ENCODE measurements at regions of chrX and their contacts with region 1.

Region 1: GRCh38 chrX:136028251-136028984 is 43.2 kb downstream of the SLC9A6 start:
- DNase-seq: peak in 7 of 9 donors; percentile 26 to 53 (median 41)
- ATAC-seq: peak; percentile 76
- H3K4me3 ChIP-seq: no peak overlapping the region
- H3K4me3 Mint-ChIP-seq: no peak overlapping the region
- H3K27ac ChIP-seq: no peak overlapping the region
- H3K27ac Mint-ChIP-seq: no peak overlapping the region
- H3K4me1 ChIP-seq: no peaks in the 10 kb centered on the region
- H3K4me1 Mint-ChIP-seq: peaks cover 0 to under 1% (median 0%) of the 10 kb centered on the region in 7 donors
- H3K27me3 ChIP-seq: no peaks in the 10 kb centered on the region
- H3K27me3 Mint-ChIP-seq: no peaks in the 10 kb centered on the region

Region 2: GRCh38 chrX:136065044-136065671 is 36.7 kb after region 1 on chrX:
- CTCF ChIA-PET with region 1: interaction called, 11 read pairs
- POLR2A ChIA-PET with region 1: no interaction called
- intact Hi-C with region 1: no loop called
- DNase-seq: peak in 7 of 9 donors; percentile 52 to 83 (median 76)
- ATAC-seq: peak; percentile 85
- H3K4me3 ChIP-seq: no peak overlapping the region
- H3K4me3 Mint-ChIP-seq: peak overlapping the region; percentile 48 to 80 (median 63)
- H3K27ac ChIP-seq: peak overlapping the region; percentile 61
- H3K27ac Mint-ChIP-seq: peak overlapping the region; percentile 70 to 98 (median 96)
- H3K4me1 ChIP-seq: peaks cover 0 to 26% of the 10 kb centered on the region in 2 donors
- H3K4me1 Mint-ChIP-seq: peaks cover 9 to 42% (median 31%) of the 10 kb centered on the region in 7 donors
- H3K27me3 ChIP-seq: no peaks in the 10 kb centered on the region
- H3K27me3 Mint-ChIP-seq: no peaks in the 10 kb centered on the region

Region 3: GRCh38 chrX:136130931-136131833 is 102.8 kb after region 1 on chrX:
- CTCF ChIA-PET with region 1: no interaction called
- POLR2A ChIA-PET with region 1: no interaction called
- intact Hi-C with region 1: no loop called
- DNase-seq: no peak
- ATAC-seq: no peak
- H3K4me3 ChIP-seq: no peak overlapping the region
- H3K4me3 Mint-ChIP-seq: no peak overlapping the region
- H3K27ac ChIP-seq: no peak overlapping the region
- H3K27ac Mint-ChIP-seq: peak overlapping the region in 1 of 9 donors; percentile 53
- H3K4me1 ChIP-seq: no peaks in the 10 kb centered on the region
- H3K4me1 Mint-ChIP-seq: peaks cover 0 to 11% (median 0%) of the 10 kb centered on the region in 7 donors
- H3K27me3 ChIP-seq: no peaks in the 10 kb centered on the region
- H3K27me3 Mint-ChIP-seq: no peaks in the 10 kb centered on the region

Region 4: DNA sequence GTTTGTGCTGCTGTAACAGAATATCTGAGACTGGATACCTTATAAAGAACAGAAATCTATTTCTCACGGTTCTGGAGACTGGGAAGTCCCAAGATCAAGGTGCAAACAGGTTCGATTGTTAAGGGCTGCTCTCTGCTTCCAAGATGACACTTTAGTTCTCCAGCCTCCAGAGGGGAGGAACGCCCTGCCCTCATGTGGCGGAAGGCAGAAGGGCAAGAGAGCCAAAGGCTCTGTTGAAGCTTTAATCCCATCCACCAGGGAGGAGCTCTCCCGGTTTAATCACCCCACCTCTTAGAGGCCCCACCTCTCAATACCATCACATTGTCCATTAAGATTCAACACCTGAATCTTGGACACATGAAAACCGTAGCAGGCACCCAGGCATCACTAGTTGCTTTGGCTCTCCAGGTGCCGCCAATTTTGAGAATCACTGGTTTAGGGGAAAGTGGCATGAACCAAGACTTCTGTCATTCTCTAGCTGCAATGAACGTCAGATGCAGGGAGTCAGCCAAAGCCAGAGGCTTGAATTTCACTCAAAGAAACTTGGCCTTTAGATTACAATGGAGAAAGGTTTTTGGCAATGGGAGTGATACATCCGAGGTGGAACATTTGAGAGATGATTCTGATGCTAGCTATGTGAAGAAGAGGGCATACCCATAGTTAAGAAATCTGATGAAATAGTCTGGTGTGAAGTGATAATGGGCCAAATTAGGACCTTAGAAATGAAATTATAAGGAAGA is 134.6 kb after region 1 on chrX:
- CTCF ChIA-PET with region 1: interaction called, 60 read pairs
- POLR2A ChIA-PET with region 1: interaction called, 4 read pairs
- intact Hi-C with region 1: loop called (anchors 1 kb)
- DNase-seq: peak in 8 of 9 donors; percentile 10 to 50 (median 36)
- ATAC-seq: peak; percentile 75
- H3K4me3 ChIP-seq: no peak overlapping the region
- H3K4me3 Mint-ChIP-seq: no peak overlapping the region
- H3K27ac ChIP-seq: no peak overlapping the region
- H3K27ac Mint-ChIP-seq: no peak overlapping the region
- H3K4me1 ChIP-seq: no peaks in the 10 kb centered on the region
- H3K4me1 Mint-ChIP-seq: peaks cover 0 to 18% (median 4%) of the 10 kb centered on the region in 7 donors
- H3K27me3 ChIP-seq: no peaks in the 10 kb centered on the region
- H3K27me3 Mint-ChIP-seq: no peaks in the 10 kb centered on the region

Region 5: GRCh38 chrX:136200466-136200865 is 172.0 kb after region 1 on chrX:
- CTCF ChIA-PET with region 1: interaction called, 5 read pairs
- POLR2A ChIA-PET with region 1: interaction called, 3 read pairs
- intact Hi-C with region 1: loop called (anchors 1 to 2 kb)
- DNase-seq: peak in 1 of 9 donors; percentile 10
- ATAC-seq: peak; percentile 42
- H3K4me3 ChIP-seq: no peak overlapping the region
- H3K4me3 Mint-ChIP-seq: no peak overlapping the region
- H3K27ac ChIP-seq: no peak overlapping the region
- H3K27ac Mint-ChIP-seq: no peak overlapping the region
- H3K4me1 ChIP-seq: peaks cover 22 to 26% of the 10 kb centered on the region in 2 donors
- H3K4me1 Mint-ChIP-seq: peaks cover 4 to 47% (median 30%) of the 10 kb centered on the region in 7 donors
- H3K27me3 ChIP-seq: no peaks in the 10 kb centered on the region
- H3K27me3 Mint-ChIP-seq: no peaks in the 10 kb centered on the region

Region 6: DNA sequence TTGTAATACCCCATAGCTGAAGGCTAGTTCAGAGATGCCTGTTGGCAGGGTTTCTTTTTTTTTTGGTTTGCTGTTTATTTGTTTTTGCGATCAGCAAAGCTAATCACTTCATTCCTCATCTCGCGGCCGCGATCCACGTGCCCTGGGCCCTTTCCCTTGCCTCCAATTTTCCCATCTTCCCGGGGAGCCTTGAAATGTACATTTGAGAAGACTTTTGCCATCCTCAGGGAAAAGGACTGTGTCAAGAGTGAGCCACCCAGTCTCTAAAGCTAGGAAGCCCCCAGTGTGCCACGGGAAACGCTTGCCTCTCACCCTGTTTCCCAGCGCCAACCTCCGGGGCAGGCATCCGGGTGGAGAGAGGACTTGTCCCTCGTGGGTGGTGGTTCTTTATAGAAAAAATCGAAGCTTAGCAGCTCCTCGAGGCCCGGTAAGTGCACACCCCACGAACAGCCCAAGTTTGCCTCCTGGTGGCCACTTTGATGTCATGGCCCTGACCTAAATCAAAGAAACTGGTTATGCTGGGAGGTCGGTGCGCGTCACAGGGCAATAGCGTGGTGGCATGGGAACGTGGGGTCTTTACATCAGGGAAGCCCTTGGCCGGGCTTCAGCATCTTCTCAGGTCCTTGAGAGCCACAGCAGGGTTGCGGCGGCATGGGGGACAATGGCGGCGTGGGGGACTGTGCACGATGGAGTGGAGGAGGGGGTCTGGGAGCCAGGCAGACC is 180.8 kb after region 1 on chrX:
- CTCF ChIA-PET with region 1: interaction called, 15 read pairs
- POLR2A ChIA-PET with region 1: interaction called, 3 read pairs
- intact Hi-C with region 1: loop called (anchors 1 kb)
- DNase-seq: peak in 7 of 9 donors; percentile 18 to 45 (median 33)
- ATAC-seq: peak; percentile 70
- H3K4me3 ChIP-seq: no peak overlapping the region
- H3K4me3 Mint-ChIP-seq: no peak overlapping the region
- H3K27ac ChIP-seq: no peak overlapping the region
- H3K27ac Mint-ChIP-seq: peak overlapping the region in 2 of 9 donors; percentile 70
- H3K4me1 ChIP-seq: peaks cover 11 to 15% of the 10 kb centered on the region in 2 donors
- H3K4me1 Mint-ChIP-seq: peaks cover 6 to 16% (median 10%) of the 10 kb centered on the region in 7 donors
- H3K27me3 ChIP-seq: no peaks in the 10 kb centered on the region
- H3K27me3 Mint-ChIP-seq: no peaks in the 10 kb centered on the region

Region 7: DNA sequence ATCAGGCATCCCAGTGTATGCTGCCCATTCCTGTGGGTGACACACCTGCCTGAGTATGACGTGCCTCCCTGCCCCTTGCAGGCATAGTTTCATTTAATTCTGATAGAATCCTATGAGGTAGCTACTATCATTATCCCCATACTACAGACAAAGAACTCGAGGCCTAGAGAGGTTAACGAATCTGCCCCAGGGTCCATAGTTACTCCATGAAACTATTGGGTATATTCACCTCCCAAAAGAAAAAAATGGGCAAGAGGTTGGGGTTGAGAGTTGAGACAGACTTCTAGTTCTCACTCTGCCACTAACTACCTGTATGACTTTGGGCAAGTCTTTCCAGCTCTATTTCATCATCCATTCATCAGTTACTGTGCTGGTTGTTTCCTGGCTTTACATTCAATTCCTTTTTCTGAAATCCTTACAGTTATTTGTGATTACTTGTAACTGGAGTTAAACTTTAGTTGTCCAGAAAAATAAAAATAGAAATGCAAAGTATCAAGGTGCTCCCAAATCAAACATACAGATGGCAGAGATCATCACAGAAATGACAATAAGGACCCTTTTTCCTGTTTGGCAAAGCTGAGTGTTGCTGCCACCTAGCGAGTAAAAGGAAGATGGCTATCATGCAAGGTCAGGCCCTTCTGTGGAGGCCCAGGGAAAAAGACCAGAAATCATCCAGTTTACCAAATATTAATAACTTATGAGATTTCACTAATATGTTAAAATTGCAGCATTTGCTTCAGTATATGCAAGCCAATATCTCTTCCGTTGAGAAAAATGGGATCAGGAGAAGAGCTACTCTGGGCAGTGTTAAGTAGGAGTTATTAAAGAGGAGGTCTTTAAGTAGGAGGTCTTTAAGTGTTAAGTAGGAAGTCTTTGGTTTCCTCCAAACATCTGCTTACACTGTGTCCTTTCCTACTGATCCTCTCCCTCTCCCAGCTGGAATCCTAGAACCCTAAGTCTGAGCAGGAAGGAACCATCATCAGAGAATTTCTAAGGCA is 239.9 kb after region 1 on chrX:
- CTCF ChIA-PET with region 1: interaction called, 16 read pairs
- POLR2A ChIA-PET with region 1: no interaction called
- intact Hi-C with region 1: loop called (anchors 1 kb)
- DNase-seq: peak in 7 of 9 donors; percentile 12 to 52 (median 43)
- ATAC-seq: peak; percentile 54
- H3K4me3 ChIP-seq: no peak overlapping the region
- H3K4me3 Mint-ChIP-seq: no peak overlapping the region
- H3K27ac ChIP-seq: no peak overlapping the region
- H3K27ac Mint-ChIP-seq: no peak overlapping the region
- H3K4me1 ChIP-seq: no peaks in the 10 kb centered on the region
- H3K4me1 Mint-ChIP-seq: peaks cover 0 to 11% (median 0%) of the 10 kb centered on the region in 7 donors
- H3K27me3 ChIP-seq: no peaks in the 10 kb centered on the region
- H3K27me3 Mint-ChIP-seq: no peaks in the 10 kb centered on the region

Region 8: DNA sequence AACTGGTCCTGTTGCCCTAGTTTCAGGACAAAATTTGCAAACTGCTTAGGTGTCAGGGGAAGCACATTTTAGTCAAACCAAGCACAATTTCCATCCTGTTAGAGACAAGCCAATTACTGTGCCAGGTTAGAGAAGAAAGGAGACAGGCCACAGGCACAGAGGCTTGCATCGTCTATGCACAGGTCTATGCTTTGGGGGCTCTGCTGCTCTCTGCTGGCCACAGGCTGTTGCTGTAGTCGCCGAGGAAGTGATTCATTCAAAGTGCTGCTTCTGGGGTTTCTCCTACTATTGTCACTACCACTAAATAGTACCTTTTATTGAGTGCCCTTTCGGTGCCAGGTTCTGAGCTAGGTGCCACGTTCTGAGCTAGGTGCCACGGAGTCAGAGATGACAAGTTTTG is 549.1 kb after region 1 on chrX:
- CTCF ChIA-PET with region 1: interaction called, 3 read pairs
- POLR2A ChIA-PET with region 1: no interaction called
- intact Hi-C with region 1: loop called in 1 of 2 experiments (anchors 1 kb)
- DNase-seq: peak; percentile 30 to 74 (median 62)
- ATAC-seq: peak; percentile 99
- H3K4me3 ChIP-seq: no peak overlapping the region
- H3K4me3 Mint-ChIP-seq: peak overlapping the region in 2 of 10 donors; percentile 20 to 63
- H3K27ac ChIP-seq: no peak overlapping the region
- H3K27ac Mint-ChIP-seq: peak overlapping the region in 8 of 9 donors; percentile 10 to 83 (median 67)
- H3K4me1 ChIP-seq: peaks cover 3 to 4% of the 10 kb centered on the region in 2 donors
- H3K4me1 Mint-ChIP-seq: peaks cover 0 to 22% (median 11%) of the 10 kb centered on the region in 7 donors
- H3K27me3 ChIP-seq: no peaks in the 10 kb centered on the region
- H3K27me3 Mint-ChIP-seq: no peaks in the 10 kb centered on the region

Measured in naive thymus-derived CD4-positive, alpha-beta T cell (primary cell).